Ovary (tissue), 10 donors: ENCODE measurements at regions of chr16 and their contacts with region 1.

Region 1: DNA sequence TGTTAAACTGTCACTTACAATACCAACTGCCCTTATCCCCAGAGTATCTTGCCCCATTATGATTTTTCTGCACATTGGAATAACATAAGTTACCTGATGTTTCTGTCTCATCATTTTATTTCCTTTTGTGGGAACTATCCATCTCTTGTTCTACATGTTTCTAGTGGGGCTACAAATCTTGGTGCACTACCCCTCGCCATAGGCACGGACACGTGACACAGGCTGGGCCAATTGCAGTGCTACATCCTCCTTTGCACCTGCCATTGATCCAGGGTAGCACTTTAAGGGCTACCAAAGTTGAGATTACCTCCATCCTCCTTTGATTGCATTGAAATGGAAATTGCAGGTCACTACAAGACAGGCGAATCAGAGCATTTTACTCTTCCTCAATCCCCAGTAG is 14.2 kb upstream of the SYT17 start:
- DNase-seq: no peak
- H3K4me3 ChIP-seq: no peak overlapping the region
- H3K27ac ChIP-seq: no peak overlapping the region
- H3K4me1 ChIP-seq: no peaks in the 10 kb centered on the region
- H3K27me3 ChIP-seq: no peaks in the 10 kb centered on the region
- CTCF ChIP-seq: no peak
- EP300 ChIP-seq: no peak
- POLR2A ChIP-seq: no peak

Region 2: GRCh38 chr16:19105891-19106624 is 47.8 kb before region 1 on chr16:
- intact Hi-C with region 1: loop called in 1 of 4 experiments (anchors 10 kb)
- DNase-seq: no peak
- H3K4me3 ChIP-seq: no peak overlapping the region
- H3K27ac ChIP-seq: no peak overlapping the region
- H3K4me1 ChIP-seq: no peaks in the 10 kb centered on the region
- H3K27me3 ChIP-seq: no peaks in the 10 kb centered on the region
- CTCF ChIP-seq: no peak
- EP300 ChIP-seq: no peak
- POLR2A ChIP-seq: no peak